IMR-90 (cell line): ENCODE measurements at regions of chr11 and their contacts with region 1.

Region 1: DNA sequence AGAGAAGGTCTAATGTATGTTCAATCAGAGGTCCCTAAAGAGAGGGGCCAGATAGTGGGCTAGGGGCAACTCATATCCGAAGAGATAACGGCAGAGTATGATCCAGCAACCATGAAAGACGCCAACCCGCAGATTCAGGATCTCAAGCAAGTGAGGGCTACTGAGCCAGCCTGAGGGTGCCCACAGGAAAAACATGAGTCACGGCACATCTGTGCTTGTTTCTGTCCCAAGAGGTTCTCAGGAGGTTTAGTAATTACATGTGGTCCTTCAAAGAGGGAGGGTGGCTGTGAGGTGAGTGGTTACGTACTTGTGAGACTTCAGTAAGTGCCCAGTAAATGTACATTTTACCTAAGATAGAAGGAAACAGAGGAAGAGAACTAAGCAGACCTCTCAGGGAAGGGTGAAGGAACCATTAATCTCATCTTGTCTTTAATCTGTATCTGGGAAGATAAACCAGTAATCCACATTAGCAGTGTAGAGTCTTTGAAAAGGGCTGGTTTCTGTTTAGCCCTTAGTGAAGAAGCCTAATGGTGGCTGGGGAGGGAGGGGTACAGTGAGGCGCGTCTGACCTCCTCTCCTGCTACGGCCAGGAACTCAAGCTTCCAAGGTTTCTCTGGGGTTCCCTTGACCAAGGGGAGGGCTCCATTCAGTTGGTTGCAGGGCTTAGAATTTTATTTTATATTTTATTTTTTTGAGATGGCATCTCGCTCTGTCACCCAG is 10.2 kb downstream of the SIRT3 start:
- DNase-seq: peak; percentile 50
- ATAC-seq: no peak
- H3K4me3 ChIP-seq: no peak overlapping the region
- H3K27ac ChIP-seq: no peak overlapping the region
- H3K4me1 ChIP-seq: peaks cover 3% of the 10 kb centered on the region; the same call in 1 of the 2 replicates
- H3K27me3 ChIP-seq: no peaks in the 10 kb centered on the region
- CTCF ChIP-seq: no peak
- POLR2A ChIP-seq: no peak
- RAD21 ChIP-seq: no peak

Region 2: DNA sequence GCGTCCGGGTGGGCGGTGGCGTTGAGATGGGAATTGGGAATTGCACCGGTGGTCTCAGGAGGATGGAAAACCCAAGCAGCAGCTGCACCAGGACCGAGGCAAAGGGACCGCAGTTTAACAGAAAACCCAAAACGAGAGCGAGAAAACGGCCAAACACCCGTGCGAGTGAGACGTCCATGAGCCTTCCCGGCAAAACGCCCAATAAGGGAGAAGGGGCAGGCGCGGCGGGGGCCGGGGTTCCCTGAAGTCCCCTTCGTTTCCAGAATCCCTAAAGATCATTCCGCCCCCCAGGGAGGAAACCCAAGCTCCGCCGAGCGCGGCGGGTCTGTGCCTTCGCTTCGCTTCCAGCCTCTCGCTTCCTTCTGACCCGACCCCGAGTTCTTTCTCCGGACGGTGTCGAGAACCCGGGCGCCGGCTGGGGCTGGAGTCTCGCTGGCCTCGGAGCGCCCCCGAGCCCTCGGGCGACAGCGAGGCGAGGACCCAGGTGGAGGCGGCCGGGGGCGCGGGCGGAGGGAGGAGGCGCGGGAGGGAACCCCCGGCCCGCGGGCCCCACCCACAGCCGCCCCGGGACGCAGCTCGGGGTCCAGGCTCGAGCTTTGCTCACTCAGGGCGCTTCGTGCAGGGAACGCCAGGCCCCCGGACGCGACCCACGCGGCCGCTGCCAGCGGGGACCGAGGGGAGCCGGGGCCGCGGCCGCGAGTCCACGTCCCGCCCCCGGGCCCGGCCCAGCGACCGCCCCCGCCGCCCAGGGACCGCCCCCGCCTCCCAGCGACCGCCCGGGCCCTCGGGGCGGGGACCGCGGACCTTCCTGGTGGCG is 62.6 kb after region 1 on chr11 and contains the start of gene PGGHG:
- CTCF ChIA-PET with region 1: no interaction called
- POLR2A ChIA-PET with region 1: no interaction called
- dilution Hi-C with region 1: no loop called
- in situ Hi-C with region 1: loop called (anchors 10 kb)
- intact Hi-C with region 1: no loop called
- DNase-seq: no peak
- ATAC-seq: peak; percentile 96
- H3K4me3 ChIP-seq: peak within 1 kb of the TSS; percentile 67
- H3K27ac ChIP-seq: no peak within 1 kb of the TSS; the same call in 1 of the 2 replicates
- H3K4me1 ChIP-seq: peaks cover 4% of the 10 kb centered on the region; the same call in 1 of the 2 replicates
- H3K27me3 ChIP-seq: peaks cover 21% of the 10 kb centered on the region
- CTCF ChIP-seq: no peak
- POLR2A ChIP-seq: no peak
- RAD21 ChIP-seq: no peak
- total RNA-seq, gene PGGHG: 1.4 and 1.8 TPM in 2 replicates

Region 3: GRCh38 chr11:535519-536454 is 309.9 kb after region 1 on chr11 and contains the start of gene HRAS:
- CTCF ChIA-PET with region 1: no interaction called
- POLR2A ChIA-PET with region 1: no interaction called
- dilution Hi-C with region 1: no loop called
- in situ Hi-C with region 1: no loop called
- intact Hi-C with region 1: no loop called
- DNase-seq: peak; percentile 90
- ATAC-seq: peak; percentile 93
- H3K4me3 ChIP-seq: peak within 1 kb of the TSS; percentile 95
- H3K27ac ChIP-seq: peak within 1 kb of the TSS; percentile 71
- H3K4me1 ChIP-seq: peaks cover 16% of the 10 kb centered on the region
- H3K27me3 ChIP-seq: no peaks in the 10 kb centered on the region
- CTCF ChIP-seq: no peak
- POLR2A ChIP-seq: peak; percentile 60
- RAD21 ChIP-seq: no peak
- total RNA-seq, gene HRAS: 99.4 and 108 TPM in 2 replicates

Region 4: DNA sequence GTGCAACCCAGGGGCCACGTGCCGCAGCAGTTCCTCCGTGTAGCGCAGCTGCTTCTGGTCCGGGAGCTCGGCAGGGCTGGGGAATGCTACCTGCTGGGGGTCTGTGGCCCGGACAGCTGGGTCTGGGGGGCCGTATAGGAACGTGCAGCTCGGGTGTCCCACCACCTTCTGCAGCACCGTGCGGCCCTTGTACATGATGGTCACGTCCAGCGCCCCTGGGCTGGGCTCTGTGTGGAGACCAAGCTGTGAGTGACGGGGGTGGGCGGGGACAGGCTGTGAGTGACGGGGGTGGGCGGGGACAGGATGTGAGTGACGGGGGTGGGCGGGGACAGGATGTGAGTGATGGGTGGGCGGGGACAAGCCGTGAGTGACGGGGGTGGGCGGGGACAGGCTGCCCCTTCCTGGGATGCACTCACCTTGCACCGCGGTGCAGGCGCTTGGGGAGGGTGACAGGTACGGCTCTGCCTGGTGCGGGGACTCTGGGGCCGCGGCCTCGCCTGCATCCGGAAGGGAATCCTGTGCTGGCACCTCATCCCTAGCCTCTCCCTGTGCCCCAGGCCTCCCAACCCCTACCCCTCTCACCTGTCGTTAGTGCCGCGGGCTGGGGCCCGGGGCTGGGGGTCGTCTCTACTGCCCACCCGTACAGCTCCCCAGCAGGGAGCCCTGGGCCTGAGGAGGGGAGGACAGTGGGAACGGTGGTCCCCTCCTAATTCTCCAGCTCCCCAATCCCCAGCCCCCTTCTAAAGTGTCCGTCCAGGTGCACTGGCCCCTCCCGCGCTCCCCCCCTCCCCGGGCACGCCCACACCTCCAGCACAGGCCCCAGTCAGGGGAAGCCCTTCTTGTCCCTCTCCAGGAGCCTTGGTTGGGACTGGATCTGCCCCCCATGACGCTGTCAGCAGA is 387.7 kb after region 1 on chr11:
- CTCF ChIA-PET with region 1: no interaction called
- POLR2A ChIA-PET with region 1: no interaction called
- dilution Hi-C with region 1: no loop called
- in situ Hi-C with region 1: no loop called
- intact Hi-C with region 1: no loop called
- DNase-seq: no peak
- ATAC-seq: no peak
- H3K4me3 ChIP-seq: no peak overlapping the region
- H3K27ac ChIP-seq: no peak overlapping the region
- H3K4me1 ChIP-seq: peaks cover 4% of the 10 kb centered on the region; the same call in 1 of the 2 replicates
- H3K27me3 ChIP-seq: no peaks in the 10 kb centered on the region
- CTCF ChIP-seq: no peak
- POLR2A ChIP-seq: no peak
- RAD21 ChIP-seq: no peak